WTC11 (cell line): ENCODE measurements at regions of chr17 and their contacts with region 1.

Region 1: GRCh38 chr17:49707608-49708514 is at the start of gene SLC35B1:
- DNase-seq: peak; percentile 99
- ATAC-seq: peak; percentile 93
- H3K4me3 Mint-ChIP-seq: peak within 1 kb of the TSS; percentile 93
- H3K27ac Mint-ChIP-seq: peak within 1 kb of the TSS; percentile 98
- H3K4me1 Mint-ChIP-seq: peaks cover 12% of the 10 kb centered on the region
- H3K27me3 Mint-ChIP-seq: no peaks in the 10 kb centered on the region; the same call in 1 of the 2 replicates
- CTCF ChIP-seq: no peak
- total RNA-seq, gene SLC35B1: 43.7 to 55.9 TPM (median 45.0 TPM) in 3 replicates

Region 2: GRCh38 chr17:49567871-49568694 is 139.8 kb before region 1 on chr17:
- CTCF ChIA-PET with region 1: interaction called, 99 read pairs
- POLR2A ChIA-PET with region 1: interaction called, 3 read pairs
- DNase-seq: peak; percentile 92
- ATAC-seq: peak; percentile 63
- H3K4me3 Mint-ChIP-seq: peak overlapping the region; percentile 69
- H3K27ac Mint-ChIP-seq: peak overlapping the region; percentile 32; the same call in 1 of the 2 replicates
- H3K4me1 Mint-ChIP-seq: peaks cover 29% of the 10 kb centered on the region
- H3K27me3 Mint-ChIP-seq: peaks cover 14% of the 10 kb centered on the region
- CTCF ChIP-seq: peak; percentile 97

Region 3: DNA sequence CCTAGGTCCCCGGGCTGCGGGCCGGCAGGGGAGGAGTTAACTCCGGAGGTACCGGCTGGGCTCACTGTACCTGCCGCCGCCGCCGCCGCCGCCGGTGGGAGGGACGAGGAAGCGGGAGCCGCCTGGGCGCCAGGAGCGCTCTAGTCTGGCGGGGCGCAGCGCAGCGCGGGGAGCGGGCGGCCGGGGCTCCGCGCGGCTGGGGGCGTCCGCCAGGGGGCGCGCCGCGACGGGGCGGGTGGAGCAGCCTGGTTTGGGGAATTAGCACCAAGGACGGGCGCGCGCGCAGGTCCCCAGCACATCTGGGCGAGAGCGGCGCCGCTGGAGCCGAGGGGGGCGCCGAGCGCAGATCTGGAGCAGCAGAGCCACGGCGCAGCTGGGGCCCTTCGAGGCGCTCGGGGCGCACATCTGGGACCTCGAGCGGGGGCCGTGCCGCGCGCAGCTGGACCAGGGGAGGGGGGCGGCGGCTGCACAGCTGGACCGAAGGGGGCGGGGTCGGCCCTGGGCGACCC is 132.2 kb before region 1 on chr17 and contains the start of gene NXPH3:
- CTCF ChIA-PET with region 1: interaction called, 99 read pairs
- POLR2A ChIA-PET with region 1: interaction called, 3 read pairs
- DNase-seq: peak; percentile 87
- ATAC-seq: peak; percentile 62
- H3K4me3 Mint-ChIP-seq: peak within 1 kb of the TSS; percentile 89
- H3K27ac Mint-ChIP-seq: no peak within 1 kb of the TSS; the same call in 1 of the 2 replicates
- H3K4me1 Mint-ChIP-seq: peaks cover 35% of the 10 kb centered on the region
- H3K27me3 Mint-ChIP-seq: peaks cover 39% of the 10 kb centered on the region
- CTCF ChIP-seq: peak; percentile 72
- total RNA-seq, gene NXPH3: 2.3 to 3.4 TPM (median 2.4 TPM) in 3 replicates

Region 4: DNA sequence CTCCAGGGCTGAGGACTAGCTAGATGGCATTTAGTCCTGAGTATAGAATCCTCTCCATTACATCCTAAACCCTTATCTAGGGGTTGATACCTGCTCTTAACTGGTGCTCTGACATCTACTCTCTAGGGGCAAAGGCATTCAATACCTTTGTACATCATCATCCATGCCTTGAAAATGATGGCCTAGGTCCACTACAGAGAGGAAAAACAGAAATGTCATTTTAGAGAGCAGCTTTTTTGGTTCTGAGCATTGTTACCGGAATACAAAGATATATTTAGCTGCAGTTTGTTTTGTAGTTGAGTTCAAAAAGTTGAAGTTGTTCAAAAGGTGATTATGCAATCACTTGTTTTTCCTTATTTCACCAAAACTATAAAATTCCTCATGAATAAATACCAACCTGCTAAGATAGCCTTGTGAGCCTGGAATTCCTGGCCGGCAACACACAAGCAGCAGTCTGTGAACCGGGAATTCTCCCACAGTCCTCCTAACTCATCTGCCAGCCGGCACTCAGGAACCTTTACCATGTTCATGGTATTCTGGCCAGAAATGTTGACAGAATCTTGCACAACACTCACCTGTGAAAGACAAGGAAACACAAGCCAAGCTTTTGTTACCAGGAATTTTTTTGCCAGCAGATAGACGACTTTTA is 96.9 kb before region 1 on chr17:
- CTCF ChIA-PET with region 1: no interaction called
- POLR2A ChIA-PET with region 1: no interaction called
- DNase-seq: no peak
- ATAC-seq: no peak
- H3K4me3 Mint-ChIP-seq: no peak overlapping the region
- H3K27ac Mint-ChIP-seq: no peak overlapping the region
- H3K4me1 Mint-ChIP-seq: no peaks in the 10 kb centered on the region
- H3K27me3 Mint-ChIP-seq: no peaks in the 10 kb centered on the region
- CTCF ChIP-seq: no peak

Region 5: GRCh38 chr17:49656247-49656646 is 51.6 kb before region 1 on chr17:
- CTCF ChIA-PET with region 1: no interaction called
- POLR2A ChIA-PET with region 1: no interaction called
- DNase-seq: no peak
- ATAC-seq: no peak
- H3K4me3 Mint-ChIP-seq: no peak overlapping the region
- H3K27ac Mint-ChIP-seq: 0 out of 2 replicates have a peak overlapping the region, but pooled peaks have one; percentile 2
- H3K4me1 Mint-ChIP-seq: no peaks in the 10 kb centered on the region
- H3K27me3 Mint-ChIP-seq: no peaks in the 10 kb centered on the region
- CTCF ChIP-seq: no peak

Region 6: DNA sequence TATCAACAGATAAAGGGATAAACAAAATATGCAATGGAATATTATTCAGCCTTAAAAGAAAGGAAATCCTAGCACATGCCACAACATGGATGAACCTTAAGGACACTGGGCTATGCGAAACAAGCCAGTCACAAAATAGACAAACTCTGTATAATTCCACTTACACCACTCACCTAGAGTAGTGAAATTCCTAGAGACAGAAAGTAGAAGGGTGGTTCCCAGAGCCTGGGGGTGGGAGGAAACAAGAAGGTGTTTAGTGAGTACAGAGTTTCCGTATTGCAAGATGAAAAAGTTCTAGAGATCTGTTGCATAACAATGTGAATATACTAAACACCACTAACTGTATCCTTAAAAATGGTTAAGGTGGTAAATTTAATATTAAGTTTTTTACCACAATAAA is 40.0 kb before region 1 on chr17:
- CTCF ChIA-PET with region 1: no interaction called
- POLR2A ChIA-PET with region 1: no interaction called
- DNase-seq: no peak
- ATAC-seq: no peak
- H3K4me3 Mint-ChIP-seq: no peak overlapping the region
- H3K27ac Mint-ChIP-seq: no peak overlapping the region
- H3K4me1 Mint-ChIP-seq: peaks cover 2% of the 10 kb centered on the region
- H3K27me3 Mint-ChIP-seq: no peaks in the 10 kb centered on the region
- CTCF ChIP-seq: no peak

Region 7: GRCh38 chr17:49677933-49678847 is 29.7 kb before region 1 on chr17 and contains the start of gene SPOP:
- CTCF ChIA-PET with region 1: interaction called, 11 read pairs
- POLR2A ChIA-PET with region 1: interaction called, 3 read pairs
- DNase-seq: peak; percentile 99
- ATAC-seq: peak; percentile 97
- H3K4me3 Mint-ChIP-seq: peak within 1 kb of the TSS; percentile 88
- H3K27ac Mint-ChIP-seq: peak within 1 kb of the TSS; percentile 96
- H3K4me1 Mint-ChIP-seq: peaks cover 18% of the 10 kb centered on the region
- H3K27me3 Mint-ChIP-seq: peaks cover 38% of the 10 kb centered on the region
- CTCF ChIP-seq: no peak
- total RNA-seq, gene SPOP: 19.2 to 32.4 TPM (median 22.4 TPM) in 3 replicates

Region 8: GRCh38 chr17:49694847-49695683 is 12.8 kb before region 1 on chr17:
- CTCF ChIA-PET with region 1: interaction called, 13 read pairs
- POLR2A ChIA-PET with region 1: no interaction called
- DNase-seq: peak; percentile 70
- ATAC-seq: peak; percentile 62
- H3K4me3 Mint-ChIP-seq: peak overlapping the region; percentile 46
- H3K27ac Mint-ChIP-seq: no peak overlapping the region
- H3K4me1 Mint-ChIP-seq: peaks cover 21% of the 10 kb centered on the region
- H3K27me3 Mint-ChIP-seq: no peaks in the 10 kb centered on the region; the same call in 1 of the 2 replicates
- CTCF ChIP-seq: peak; percentile 86

Region 9: DNA sequence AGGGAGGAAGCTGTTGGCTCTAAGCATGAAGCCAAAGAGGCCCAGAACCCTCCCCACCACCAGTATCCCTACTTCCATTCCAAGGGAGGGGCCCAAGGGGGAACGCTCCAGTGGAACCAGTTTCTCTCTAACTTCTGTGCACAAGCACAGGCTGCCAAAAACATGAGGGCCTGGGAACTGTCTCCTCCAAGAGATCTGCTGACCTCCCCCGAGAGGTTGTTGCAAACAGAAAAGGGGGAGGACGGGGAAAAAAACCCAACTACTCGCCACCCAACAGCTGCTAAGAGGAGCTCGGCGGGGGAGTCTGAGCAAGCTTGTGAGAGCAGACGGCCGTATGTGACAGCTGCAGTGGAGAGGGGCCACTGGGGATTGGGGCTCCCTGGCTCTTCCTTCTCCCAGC is 15.6 kb after region 1 on chr17:
- CTCF ChIA-PET with region 1: interaction called, 11 read pairs
- POLR2A ChIA-PET with region 1: interaction called, 6 read pairs
- DNase-seq: no peak
- ATAC-seq: no peak
- H3K4me3 Mint-ChIP-seq: no peak overlapping the region
- H3K27ac Mint-ChIP-seq: no peak overlapping the region
- H3K4me1 Mint-ChIP-seq: 0 out of 2 replicates have a peak, but pooled peaks cover 2% of the 10 kb centered on the region
- H3K27me3 Mint-ChIP-seq: no peaks in the 10 kb centered on the region; the same call in 1 of the 2 replicates
- CTCF ChIP-seq: no peak

Region 10: GRCh38 chr17:49763735-49764558 is 56.1 kb after region 1 on chr17 and contains the start of gene FAM117A:
- CTCF ChIA-PET with region 1: interaction called, 22 read pairs
- POLR2A ChIA-PET with region 1: interaction called, 13 read pairs
- DNase-seq: peak; percentile 98
- ATAC-seq: peak; percentile 98
- H3K4me3 Mint-ChIP-seq: peak within 1 kb of the TSS; percentile 93
- H3K27ac Mint-ChIP-seq: peak within 1 kb of the TSS; percentile 74
- H3K4me1 Mint-ChIP-seq: peaks cover 39% of the 10 kb centered on the region
- H3K27me3 Mint-ChIP-seq: peaks cover 29% of the 10 kb centered on the region
- CTCF ChIP-seq: no peak
- total RNA-seq, gene FAM117A: 26.2 to 30.4 TPM (median 29.7 TPM) in 3 replicates